ENCODE measurements at regions of chr11 and their contacts with region 1.

Region 1: GRCh38 chr11:64846998-64847666 is 2.7 kb upstream of the CDC42BPG start:
- DNase-seq: peak; percentile 79 to 97 (median 92)
- ATAC-seq: peak; percentile 60
- H3K4me3 ChIP-seq: no peak overlapping the region
- H3K4me3 Mint-ChIP-seq: no peak overlapping the region
- H3K27ac ChIP-seq: peak overlapping the region in 1 of 2 experiments; percentile 54
- H3K27ac Mint-ChIP-seq: peak overlapping the region; percentile 32
- H3K4me1 ChIP-seq: peaks cover 63% of the 10 kb centered on the region
- H3K4me1 Mint-ChIP-seq: peaks cover 60% of the 10 kb centered on the region
- H3K27me3 ChIP-seq: no peaks in the 10 kb centered on the region
- H3K27me3 Mint-ChIP-seq: no peaks in the 10 kb centered on the region
- CTCF ChIP-seq: peak; percentile 98

Region 2: GRCh38 chr11:64778508-64779346 is 68.4 kb before region 1 on chr11 and contains the start of gene SF1:
- CTCF ChIA-PET with region 1: interaction called, 6 read pairs
- POLR2A ChIA-PET with region 1: interaction called, 6 read pairs
- intact Hi-C with region 1: loop called in 1 of 2 experiments (anchors 2 kb)
- DNase-seq: peak; percentile 97 to 100 (median 99)
- ATAC-seq: peak; percentile 82
- H3K4me3 ChIP-seq: peak within 1 kb of the TSS; percentile 70 to 97
- H3K4me3 Mint-ChIP-seq: peak within 1 kb of the TSS; percentile 93
- H3K27ac ChIP-seq: peak within 1 kb of the TSS; percentile 93 to 98
- H3K27ac Mint-ChIP-seq: peak within 1 kb of the TSS; percentile 99
- H3K4me1 ChIP-seq: peaks cover 53% of the 10 kb centered on the region
- H3K4me1 Mint-ChIP-seq: peaks cover 58% of the 10 kb centered on the region
- H3K27me3 ChIP-seq: no peaks in the 10 kb centered on the region
- H3K27me3 Mint-ChIP-seq: no peaks in the 10 kb centered on the region
- CTCF ChIP-seq: no peak
- total RNA-seq, gene SF1: 1,574 to 1,625 TPM

Region 3: GRCh38 chr11:64810271-64810890 is 36.8 kb before region 1 on chr11 and contains the start of gene MEN1:
- CTCF ChIA-PET with region 1: interaction called, 9 read pairs
- POLR2A ChIA-PET with region 1: interaction called, 20 read pairs
- intact Hi-C with region 1: no loop called
- DNase-seq: peak; percentile 49 to 87 (median 75)
- ATAC-seq: peak; percentile 87
- H3K4me3 ChIP-seq: peak within 1 kb of the TSS; percentile 79 to 99
- H3K4me3 Mint-ChIP-seq: peak within 1 kb of the TSS; percentile 95
- H3K27ac ChIP-seq: peak within 1 kb of the TSS; percentile 60 to 92
- H3K27ac Mint-ChIP-seq: peak within 1 kb of the TSS; percentile 94
- H3K4me1 ChIP-seq: peaks cover 14% of the 10 kb centered on the region
- H3K4me1 Mint-ChIP-seq: peaks cover 31% of the 10 kb centered on the region
- H3K27me3 ChIP-seq: no peaks in the 10 kb centered on the region
- H3K27me3 Mint-ChIP-seq: no peaks in the 10 kb centered on the region
- CTCF ChIP-seq: no peak
- total RNA-seq, gene MEN1: 17.6 to 19.1 TPM

Region 4: DNA sequence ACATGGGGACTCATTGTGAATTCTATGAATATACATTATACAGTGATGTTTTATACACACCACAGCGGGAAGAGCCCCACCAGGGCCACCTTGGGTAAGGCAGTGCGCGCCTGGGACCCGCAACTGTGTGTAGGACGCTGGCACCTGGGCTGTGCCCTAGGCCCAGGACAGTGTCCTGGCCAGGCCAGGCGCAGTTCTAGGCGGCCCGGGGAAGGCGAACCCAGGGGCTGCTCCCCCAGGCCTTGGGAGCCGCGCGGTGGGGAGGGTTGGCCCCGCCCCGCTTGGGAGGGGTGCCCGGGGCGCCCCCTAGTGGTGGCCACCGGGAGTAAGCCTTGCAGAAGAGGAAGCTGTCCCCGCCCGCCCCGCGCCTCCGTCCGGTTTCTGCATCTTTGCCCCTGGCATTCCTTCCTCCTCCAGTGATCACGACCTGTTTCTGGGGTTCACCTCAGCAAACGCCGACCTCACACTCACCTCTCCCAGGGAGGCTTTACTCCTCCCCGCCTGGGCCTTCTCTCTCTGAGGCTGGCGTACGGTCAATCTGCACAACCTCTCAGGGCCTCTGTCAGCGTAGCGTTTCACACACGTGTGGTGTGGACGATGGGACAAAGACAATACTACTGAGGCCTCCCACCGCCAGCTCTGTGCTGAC is 40.7 kb after region 1 on chr11:
- CTCF ChIA-PET with region 1: interaction called, 1,398 read pairs
- POLR2A ChIA-PET with region 1: interaction called, 810 read pairs
- intact Hi-C with region 1: loop called in 1 of 2 experiments (anchors 1 kb)
- DNase-seq: peak; percentile 64 to 94 (median 84)
- ATAC-seq: peak; percentile 86
- H3K4me3 ChIP-seq: peak overlapping the region; percentile 27 to 37
- H3K4me3 Mint-ChIP-seq: peak overlapping the region; percentile 78
- H3K27ac ChIP-seq: peak overlapping the region in 1 of 2 experiments; percentile 46
- H3K27ac Mint-ChIP-seq: peak overlapping the region; percentile 66
- H3K4me1 ChIP-seq: peaks cover 25% of the 10 kb centered on the region
- H3K4me1 Mint-ChIP-seq: peaks cover 37% of the 10 kb centered on the region
- H3K27me3 ChIP-seq: no peaks in the 10 kb centered on the region
- H3K27me3 Mint-ChIP-seq: no peaks in the 10 kb centered on the region
- CTCF ChIP-seq: peak; percentile 89

Region 5: GRCh38 chr11:64924102-64924851 is 77.1 kb after region 1 on chr11 and contains the start of gene PPP2R5B:
- CTCF ChIA-PET with region 1: interaction called, 5 read pairs
- POLR2A ChIA-PET with region 1: no interaction called
- intact Hi-C with region 1: loop called in 1 of 2 experiments (anchors 1 kb)
- DNase-seq: peak; percentile 78 to 94 (median 90)
- ATAC-seq: peak; percentile 94
- H3K4me3 ChIP-seq: peak within 1 kb of the TSS; percentile 69 to 76
- H3K4me3 Mint-ChIP-seq: peak within 1 kb of the TSS; percentile 95
- H3K27ac ChIP-seq: peak within 1 kb of the TSS; percentile 58 to 92
- H3K27ac Mint-ChIP-seq: peak within 1 kb of the TSS; percentile 96
- H3K4me1 ChIP-seq: peaks cover 19% of the 10 kb centered on the region
- H3K4me1 Mint-ChIP-seq: peaks cover 15% of the 10 kb centered on the region
- H3K27me3 ChIP-seq: no peaks in the 10 kb centered on the region
- H3K27me3 Mint-ChIP-seq: no peaks in the 10 kb centered on the region
- CTCF ChIP-seq: no peak
- total RNA-seq, gene PPP2R5B: 14.8 to 18.0 TPM

Region 6: DNA sequence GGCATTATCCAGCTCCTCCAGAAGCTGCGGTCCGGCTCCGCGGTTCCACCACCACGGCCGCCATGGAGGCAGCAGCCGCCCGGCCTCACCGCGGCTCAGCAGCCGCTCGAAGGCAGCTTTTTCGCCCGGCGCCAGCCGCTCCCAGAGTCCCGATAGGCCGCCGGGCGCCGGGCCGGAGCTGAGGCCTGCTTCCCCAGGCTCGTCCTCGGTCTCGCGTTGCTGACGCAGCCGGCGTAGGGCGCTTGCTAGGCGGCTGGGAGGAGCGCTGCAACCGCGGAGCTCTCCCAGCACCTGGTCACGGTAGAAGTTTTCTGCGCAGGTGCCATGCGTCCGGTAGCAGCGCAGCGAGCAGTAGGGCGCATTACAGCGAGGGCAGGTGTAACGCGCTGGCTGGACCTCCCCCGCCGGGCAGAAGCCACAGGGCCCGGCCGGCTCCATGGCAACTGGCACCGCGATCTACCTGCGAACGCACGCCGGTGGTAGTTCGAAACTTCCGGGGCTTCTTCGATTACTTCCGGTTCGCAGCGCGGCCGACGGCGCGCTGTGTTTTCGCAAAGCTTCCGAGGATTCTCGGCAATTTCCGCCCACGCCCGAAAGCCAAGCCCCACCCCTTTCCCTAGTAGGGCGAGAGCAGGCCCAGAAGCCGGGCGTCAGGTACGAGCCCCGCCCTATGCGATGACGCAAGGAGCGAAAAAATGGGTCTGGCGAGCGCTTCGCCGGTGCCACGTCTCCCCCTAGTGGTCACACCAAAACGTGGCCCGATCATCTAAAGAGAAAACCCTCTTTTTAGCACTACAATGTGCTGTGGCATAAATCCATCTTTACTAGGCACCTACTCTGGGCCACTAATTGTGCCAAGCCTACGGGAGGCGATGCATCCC is 270.3 kb after region 1 on chr11 and contains the start of gene ZNHIT2:
- CTCF ChIA-PET with region 1: interaction called, 3 read pairs
- POLR2A ChIA-PET with region 1: interaction called, 4 read pairs
- intact Hi-C with region 1: loop called (anchors 2 to 10 kb)
- DNase-seq: peak; percentile 99 to 100 (median 100)
- ATAC-seq: peak; percentile 70
- H3K4me3 ChIP-seq: peak within 1 kb of the TSS; percentile 88
- H3K4me3 Mint-ChIP-seq: peak within 1 kb of the TSS; percentile 88
- H3K27ac ChIP-seq: peak within 1 kb of the TSS; percentile 88 to 95
- H3K27ac Mint-ChIP-seq: peak within 1 kb of the TSS; percentile 96
- H3K4me1 ChIP-seq: peaks cover 49% of the 10 kb centered on the region
- H3K4me1 Mint-ChIP-seq: peaks cover 56% of the 10 kb centered on the region
- H3K27me3 ChIP-seq: no peaks in the 10 kb centered on the region
- H3K27me3 Mint-ChIP-seq: no peaks in the 10 kb centered on the region
- CTCF ChIP-seq: peak; percentile 79
- total RNA-seq, gene ZNHIT2: 8.9 to 9.3 TPM